ENCODE measurements at regions of chr10 and their contacts with region 1.

Region 1: DNA sequence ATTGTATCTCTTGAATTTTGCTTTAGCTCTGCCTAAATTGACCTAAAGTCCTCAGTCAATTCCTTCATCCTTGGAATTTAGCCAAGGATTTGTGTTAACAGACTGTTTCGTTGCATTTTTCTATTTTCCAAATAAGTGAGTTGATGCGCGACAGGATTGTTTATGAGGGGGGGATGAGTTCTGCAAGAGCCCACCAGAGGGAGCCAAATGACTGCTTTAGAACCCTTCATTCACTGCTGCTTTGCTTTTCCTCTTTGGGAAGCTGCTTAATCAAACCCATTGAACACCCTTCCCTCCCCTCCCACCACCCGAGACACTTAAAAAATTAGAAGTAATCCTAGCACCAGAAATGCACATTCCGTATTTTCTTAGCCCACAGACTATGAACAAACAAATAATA is 33.7 kb upstream of the PTF1A start:
- DNase-seq: no peak
- H3K4me3 ChIP-seq: peak overlapping the region in 1 of 3 donors; percentile 15
- H3K27ac ChIP-seq: no peak overlapping the region
- H3K4me1 ChIP-seq: no peaks in the 10 kb centered on the region
- H3K27me3 ChIP-seq: peaks cover 0 to 15% of the 10 kb centered on the region in 2 donors
- CTCF ChIP-seq: peak in 2 of 3 donors; percentile 59 to 60
- POLR2A ChIP-seq: no peak

Region 2: DNA sequence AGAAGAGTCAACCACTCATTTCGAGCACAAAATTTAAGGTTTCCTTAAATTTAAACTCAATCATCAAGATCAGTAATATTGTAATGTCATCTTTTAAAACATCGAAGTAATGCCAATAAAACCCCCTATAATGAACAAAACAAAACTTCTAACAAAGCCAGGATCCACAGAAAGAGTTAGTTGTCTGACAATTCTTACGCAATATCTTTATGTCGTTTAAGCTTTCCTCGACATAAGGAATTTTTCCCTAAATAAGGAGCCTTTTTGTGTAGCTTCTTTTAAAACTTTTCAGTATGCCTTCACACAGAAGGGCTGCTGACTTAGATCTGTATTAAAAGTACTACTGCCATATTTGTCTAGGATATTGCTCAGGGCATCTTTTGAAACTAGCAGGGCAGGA is 948.1 kb before region 1 on chr10:
- intact Hi-C with region 1: loop called (anchors 5 kb)
- DNase-seq: no peak
- H3K4me3 ChIP-seq: no peak overlapping the region
- H3K27ac ChIP-seq: no peak overlapping the region
- H3K4me1 ChIP-seq: no peaks in the 10 kb centered on the region
- H3K27me3 ChIP-seq: no peaks in the 10 kb centered on the region
- CTCF ChIP-seq: no peak
- POLR2A ChIP-seq: no peak

Region 3: GRCh38 chr10:23192737-23193434 is 34.5 kb after region 1 on chr10:
- intact Hi-C with region 1: loop called (anchors 1 kb)
- DNase-seq: no peak
- H3K4me3 ChIP-seq: peak overlapping the region in 1 of 3 donors; percentile 43
- H3K27ac ChIP-seq: no peak overlapping the region
- H3K4me1 ChIP-seq: no peaks in the 10 kb centered on the region
- H3K27me3 ChIP-seq: peaks cover 0 to 94% of the 10 kb centered on the region in 2 donors
- CTCF ChIP-seq: no peak
- POLR2A ChIP-seq: no peak

Measured in breast epithelium (tissue), 4 donors.